Common myeloid progenitor, CD34-positive (primary cell): ENCODE measurements at regions of chr1 and their contacts with region 1.

Region 1: DNA sequence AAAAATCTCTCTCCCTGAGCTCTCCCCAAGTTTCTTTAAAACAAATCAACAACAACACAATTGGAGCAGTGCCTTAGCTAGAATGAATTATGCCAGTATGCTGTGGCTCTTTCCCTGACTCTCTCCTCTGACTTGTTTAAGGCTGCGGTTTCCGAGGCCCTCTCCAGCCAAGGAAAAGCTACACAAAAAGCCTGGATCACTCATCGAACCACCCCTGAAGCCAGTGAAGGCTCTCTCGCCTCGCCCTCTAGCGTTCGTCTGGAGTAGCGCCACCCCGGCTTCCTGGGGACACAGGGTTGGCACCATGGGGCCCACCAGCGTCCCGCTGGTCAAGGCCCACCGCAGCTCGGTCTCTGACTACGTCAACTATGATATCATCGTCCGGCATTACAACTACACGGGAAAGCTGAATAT is 1.9 kb downstream of the S1PR1 start:
- DNase-seq: peak; percentile 67 to 70 (median 68)
- H3K4me3 ChIP-seq: peak overlapping the region in 6 of 7 experiments; percentile 45 to 93 (median 60)
- H3K27ac ChIP-seq: no peak overlapping the region
- H3K4me1 ChIP-seq: peaks cover 13 to 55% (median 33%) of the 10 kb centered on the region in 4 experiments
- H3K27me3 ChIP-seq: peaks cover 0 to 15% (median 6%) of the 10 kb centered on the region in 5 experiments

Region 2: DNA sequence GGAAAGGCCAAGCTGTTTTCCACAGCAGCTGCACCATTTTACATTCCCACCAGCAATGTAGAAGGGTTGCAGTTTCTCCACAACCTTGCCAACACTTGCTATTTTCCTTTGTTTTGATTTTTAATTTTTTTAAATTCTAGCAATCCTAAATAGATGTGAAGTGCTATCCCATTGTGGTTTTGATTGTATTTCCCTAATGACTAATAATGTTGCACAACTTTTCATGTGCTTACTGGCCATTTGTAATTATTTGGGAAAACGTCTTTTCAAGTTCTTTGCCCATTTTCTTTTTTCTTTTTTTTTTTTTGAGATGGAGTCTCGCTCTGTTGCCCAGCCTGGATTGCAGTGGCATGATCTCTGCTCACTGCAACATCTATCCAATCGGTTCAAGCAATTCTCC is 465.2 kb before region 1 on chr1:
- CTCF ChIA-PET with region 1: no interaction called
- POLR2A ChIA-PET with region 1: no interaction called
- DNase-seq: no peak
- H3K4me3 ChIP-seq: no peak overlapping the region
- H3K27ac ChIP-seq: no peak overlapping the region
- H3K4me1 ChIP-seq: peaks cover 0 to 5% (median 0%) of the 10 kb centered on the region in 4 experiments
- H3K27me3 ChIP-seq: no peaks in the 10 kb centered on the region

Region 3: GRCh38 chr1:100921109-100921706 is 317.5 kb before region 1 on chr1:
- CTCF ChIA-PET with region 1: interaction called, 18 read pairs
- POLR2A ChIA-PET with region 1: no interaction called
- DNase-seq: peak; percentile 53 to 67 (median 58)
- H3K4me3 ChIP-seq: no peak overlapping the region
- H3K27ac ChIP-seq: no peak overlapping the region
- H3K4me1 ChIP-seq: no peaks in the 10 kb centered on the region
- H3K27me3 ChIP-seq: no peaks in the 10 kb centered on the region

Region 4: DNA sequence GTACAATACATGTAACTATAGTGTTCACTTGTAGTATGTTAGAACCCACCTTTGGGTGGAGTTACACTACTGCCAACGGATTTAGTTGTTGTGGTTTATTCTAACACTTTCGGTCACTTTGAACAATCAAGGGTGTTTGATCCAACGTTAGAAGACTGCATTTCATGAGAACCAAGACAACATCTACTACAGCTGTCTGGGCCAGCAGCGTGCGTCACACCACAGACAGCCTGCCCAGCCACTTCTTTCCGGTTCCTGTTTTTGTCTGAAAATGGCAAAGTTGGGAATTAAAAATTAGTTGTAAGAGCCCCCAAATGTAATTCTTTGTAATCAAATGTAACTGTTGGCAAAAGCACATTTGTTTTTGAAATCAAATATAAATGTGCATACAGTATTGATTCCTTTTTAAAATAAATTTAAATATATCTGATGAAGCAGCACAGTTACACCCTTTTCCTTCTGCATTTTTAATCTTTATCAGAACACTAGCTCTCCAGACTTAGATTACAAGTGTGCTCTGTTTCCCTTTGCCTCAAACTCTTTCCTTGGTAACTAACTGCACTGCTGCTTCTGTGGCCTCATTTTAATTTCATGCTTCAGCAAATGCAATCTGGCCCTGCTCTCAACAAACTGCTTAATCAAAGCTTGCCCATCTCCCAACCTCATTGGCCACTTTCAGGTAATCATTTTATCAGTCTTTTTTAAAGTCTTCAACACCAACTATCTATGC is 126.5 kb before region 1 on chr1:
- CTCF ChIA-PET with region 1: interaction called, 13 read pairs
- POLR2A ChIA-PET with region 1: interaction called, 7 read pairs
- DNase-seq: peak; percentile 91 to 98 (median 96)
- H3K4me3 ChIP-seq: peak overlapping the region in 5 of 7 experiments; percentile 3 to 48 (median 14)
- H3K27ac ChIP-seq: peak overlapping the region; percentile 77 to 89
- H3K4me1 ChIP-seq: peaks cover 24 to 43% (median 27%) of the 10 kb centered on the region in 4 experiments
- H3K27me3 ChIP-seq: no peaks in the 10 kb centered on the region

Region 5: GRCh38 chr1:101128211-101128727 is 110.4 kb before region 1 on chr1:
- CTCF ChIA-PET with region 1: interaction called, 11 read pairs
- POLR2A ChIA-PET with region 1: interaction called, 7 read pairs
- DNase-seq: peak; percentile 65 to 91 (median 83)
- H3K4me3 ChIP-seq: peak overlapping the region in 5 of 7 experiments; percentile 1 to 54 (median 44)
- H3K27ac ChIP-seq: peak overlapping the region; percentile 34 to 80
- H3K4me1 ChIP-seq: peaks cover 16 to 22% (median 18%) of the 10 kb centered on the region in 4 experiments
- H3K27me3 ChIP-seq: no peaks in the 10 kb centered on the region

Region 6: GRCh38 chr1:101257500-101258325 is 19.0 kb after region 1 on chr1:
- CTCF ChIA-PET with region 1: interaction called, 11 read pairs
- POLR2A ChIA-PET with region 1: interaction called, 3 read pairs
- DNase-seq: peak; percentile 80 to 94 (median 94)
- H3K4me3 ChIP-seq: peak overlapping the region in 3 of 7 experiments; percentile 36 to 47 (median 38)
- H3K27ac ChIP-seq: peak overlapping the region in 1 of 2 experiments; percentile 67
- H3K4me1 ChIP-seq: peaks cover 40 to 59% (median 53%) of the 10 kb centered on the region in 4 experiments
- H3K27me3 ChIP-seq: no peaks in the 10 kb centered on the region